Left ventricle myocardium superior (tissue), 1 donor: ENCODE measurements at regions of chr11 and their contacts with region 1.

Region 1: DNA sequence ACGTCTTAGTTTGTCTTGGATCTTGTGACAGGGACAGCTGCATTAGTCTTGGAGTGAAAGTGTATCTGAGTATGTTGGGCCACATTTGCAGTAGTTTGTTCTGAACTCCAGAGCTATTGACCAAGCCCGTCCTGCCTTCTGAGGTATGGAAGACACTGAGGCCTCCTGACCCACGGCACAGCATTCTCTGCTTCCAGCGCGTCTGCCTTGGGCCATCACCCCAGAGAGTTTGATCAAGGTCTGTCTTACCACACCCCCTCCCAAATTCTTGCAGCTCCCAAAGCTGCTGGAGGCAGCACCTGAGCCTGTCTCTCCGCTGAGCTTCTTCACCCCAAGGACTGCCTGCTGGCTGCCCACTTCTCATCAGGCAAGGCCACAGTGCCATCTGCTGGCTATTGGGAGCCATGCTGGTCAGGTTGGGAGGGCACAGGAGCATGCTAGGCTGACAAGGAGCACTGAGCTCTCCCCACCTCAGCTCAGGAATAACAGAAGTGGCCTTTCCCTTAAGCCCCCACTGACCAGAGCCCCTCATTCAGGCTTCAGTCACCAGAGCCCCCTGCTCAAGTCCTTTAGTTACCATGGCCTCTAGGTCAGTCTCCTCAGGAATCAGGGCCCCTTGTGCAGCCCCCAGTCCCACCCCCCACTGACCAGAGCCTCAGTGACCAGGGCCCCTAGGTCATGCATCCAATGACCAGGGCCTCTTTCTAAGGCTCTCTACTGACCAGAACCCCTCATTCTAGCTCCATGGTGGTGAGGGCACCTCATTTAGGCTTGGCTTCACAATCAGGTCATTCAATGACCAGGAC is 27.2 kb upstream of the SMPD1 start:
- DNase-seq: peak; percentile 86
- ATAC-seq: peak; percentile 92

Region 2: GRCh38 chr11:6022956-6023355 is 340.1 kb before region 1 on chr11:
- intact Hi-C with region 1: loop called (anchors 5 kb)
- DNase-seq: no peak
- ATAC-seq: peak; percentile 72

Region 3: DNA sequence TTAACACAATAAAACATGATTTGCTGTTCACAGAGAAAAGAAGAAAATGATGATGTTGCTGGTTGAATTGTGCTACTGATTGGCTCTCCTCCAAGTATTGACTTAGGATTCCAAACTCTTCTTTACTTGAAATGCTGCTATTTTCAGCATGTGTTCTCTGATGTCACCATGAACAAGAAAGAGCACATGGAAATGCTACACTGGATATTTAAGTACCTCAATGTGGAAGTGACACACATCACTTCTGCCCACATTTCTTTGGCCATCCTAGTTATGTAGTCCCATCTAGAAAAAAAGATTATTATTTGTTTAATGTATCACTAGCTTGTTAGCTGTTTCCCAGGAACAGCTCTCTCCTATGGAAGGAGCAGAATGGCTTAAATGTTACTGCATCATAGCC is 220.1 kb before region 1 on chr11:
- intact Hi-C with region 1: no loop called
- DNase-seq: no peak
- ATAC-seq: no peak

Region 4: DNA sequence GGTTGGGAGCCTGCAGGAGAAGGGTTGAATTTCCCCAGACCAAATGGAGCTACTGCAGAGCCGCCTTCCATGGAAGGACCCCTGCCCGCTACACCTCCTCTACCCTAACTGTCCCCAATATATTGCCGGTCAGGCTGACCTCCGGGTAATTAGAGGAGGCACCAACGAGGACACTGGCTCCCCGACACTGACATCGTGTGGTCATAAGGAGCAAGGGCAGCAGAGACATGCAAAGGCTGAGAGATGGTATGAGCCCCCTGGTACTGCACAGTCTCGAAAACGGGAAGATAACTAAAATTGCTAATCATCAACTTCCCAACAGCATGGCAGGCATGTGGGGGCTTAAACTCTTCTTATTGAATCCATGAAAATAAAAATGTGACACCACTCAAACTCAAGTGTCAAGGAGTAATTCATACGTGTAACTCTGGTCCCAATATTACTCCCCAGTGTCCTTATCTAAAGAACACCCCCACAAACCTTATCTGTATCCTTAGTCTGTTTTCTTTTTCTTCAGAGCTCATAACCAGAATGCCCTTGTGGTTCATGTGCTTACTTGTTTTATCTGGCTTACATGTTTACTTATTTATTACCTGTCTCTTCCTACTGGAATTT is 47.2 kb before region 1 on chr11:
- intact Hi-C with region 1: no loop called
- DNase-seq: peak; percentile 71
- ATAC-seq: no peak